ENCODE measurements at regions of chr9 and their contacts with region 1.

Region 1: GRCh38 chr9:106228861-106229260 is 534.5 kb downstream of the TMEM38B start:
- DNase-seq: no peak
- H3K4me3 ChIP-seq: no peak overlapping the region
- CTCF ChIP-seq: no peak

Region 2: DNA sequence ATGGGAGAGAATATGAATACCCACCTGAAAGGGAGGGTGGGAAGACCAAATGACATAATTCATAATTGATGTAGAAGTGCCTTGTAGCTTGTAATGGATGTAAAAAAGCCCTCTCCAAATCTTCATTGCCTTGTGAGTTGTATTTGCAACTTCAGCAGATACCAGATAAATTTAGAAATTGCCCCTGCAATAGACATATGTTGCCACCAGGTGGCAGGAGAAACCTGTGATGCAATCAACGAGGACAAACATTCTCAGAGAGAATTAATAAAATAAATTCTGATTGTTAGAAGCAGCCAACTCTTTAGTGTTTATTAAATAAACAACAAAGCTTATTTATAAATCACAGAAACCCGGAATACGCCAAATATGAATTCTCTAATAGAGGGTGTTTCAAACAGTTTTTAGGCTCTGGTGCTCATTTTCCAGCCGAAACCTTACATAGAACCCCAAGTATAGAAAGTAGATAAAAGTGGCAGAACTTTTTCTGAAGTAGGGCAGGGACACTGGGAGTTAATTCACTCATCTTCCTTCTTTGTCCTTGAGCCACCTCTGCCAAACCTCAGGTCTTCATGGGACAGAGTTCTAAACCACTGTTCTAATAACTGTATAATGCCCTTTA is 386.7 kb before region 1 on chr9:
- in situ Hi-C with region 1: loop called (anchors 10 kb)
- DNase-seq: peak; percentile 16
- H3K4me3 ChIP-seq: no peak overlapping the region
- CTCF ChIP-seq: peak; percentile 86

Region 3: GRCh38 chr9:106179154-106179553 is 49.7 kb before region 1 on chr9:
- in situ Hi-C with region 1: no loop called
- DNase-seq: no peak
- H3K4me3 ChIP-seq: no peak overlapping the region
- CTCF ChIP-seq: no peak